ENCODE measurements at regions of chr11 and their contacts with region 1.

Region 1: GRCh38 chr11:126194121-126194543 is 17.3 kb downstream of the RPUSD4 start:
- DNase-seq: no peak
- H3K4me3 Mint-ChIP-seq: no peak overlapping the region
- H3K27ac Mint-ChIP-seq: no peak overlapping the region
- H3K4me1 Mint-ChIP-seq: no peaks in the 10 kb centered on the region
- H3K27me3 Mint-ChIP-seq: no peaks in the 10 kb centered on the region

Region 2: DNA sequence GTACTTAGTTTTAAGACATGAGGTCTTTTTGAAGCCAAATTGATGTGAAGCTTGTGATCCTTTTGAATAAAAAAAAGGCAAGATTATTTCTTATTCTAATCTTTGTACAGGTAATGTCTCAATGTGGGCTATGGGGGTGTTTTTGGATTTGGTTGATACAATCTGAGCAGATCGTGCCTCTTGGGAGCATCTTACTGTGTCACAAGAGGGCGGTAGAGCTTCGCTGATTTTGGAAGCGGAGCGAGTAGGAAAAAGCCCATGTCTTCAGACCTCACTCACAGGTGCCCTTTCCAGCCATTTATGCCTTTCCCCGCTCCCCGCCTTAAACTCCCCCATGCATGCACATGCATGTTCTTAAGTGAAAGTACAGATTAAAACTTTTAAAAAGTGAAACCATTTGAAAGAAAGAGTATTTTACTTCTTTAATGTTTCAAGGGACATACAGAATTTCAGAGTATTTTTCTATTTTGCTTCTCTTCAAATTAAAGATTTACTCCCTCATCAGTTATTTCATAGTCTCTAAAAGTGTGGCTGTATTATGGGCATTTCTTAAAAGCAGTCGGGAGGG is 271.0 kb before region 1 on chr11:
- intact Hi-C with region 1: loop called (anchors 1 kb)
- DNase-seq: peak; percentile 35
- H3K4me3 Mint-ChIP-seq: no peak overlapping the region
- H3K27ac Mint-ChIP-seq: no peak overlapping the region
- H3K4me1 Mint-ChIP-seq: no peaks in the 10 kb centered on the region
- H3K27me3 Mint-ChIP-seq: peaks cover 16% of the 10 kb centered on the region

Region 3: GRCh38 chr11:125941619-125942611 is 252.2 kb before region 1 on chr11:
- intact Hi-C with region 1: loop called (anchors 1 kb)
- DNase-seq: peak; percentile 22
- H3K4me3 Mint-ChIP-seq: no peak overlapping the region
- H3K27ac Mint-ChIP-seq: no peak overlapping the region
- H3K4me1 Mint-ChIP-seq: peaks cover 9% of the 10 kb centered on the region
- H3K27me3 Mint-ChIP-seq: no peaks in the 10 kb centered on the region

Measured in activated T-helper 2 cell treated with anti-CD3 and anti-CD28 coated beads, Interferon-gamma antibody, Interleukin-2, Interleukin-4, amounts not matched to agents 10 μg/mL and 5 μg/mL and 100 μg/mL, durations not matched to agents 14 hours and 24 hours and 36 hours (primary cell).